ENCODE measurements at regions of chr4 and their contacts with region 1.

Region 1: DNA sequence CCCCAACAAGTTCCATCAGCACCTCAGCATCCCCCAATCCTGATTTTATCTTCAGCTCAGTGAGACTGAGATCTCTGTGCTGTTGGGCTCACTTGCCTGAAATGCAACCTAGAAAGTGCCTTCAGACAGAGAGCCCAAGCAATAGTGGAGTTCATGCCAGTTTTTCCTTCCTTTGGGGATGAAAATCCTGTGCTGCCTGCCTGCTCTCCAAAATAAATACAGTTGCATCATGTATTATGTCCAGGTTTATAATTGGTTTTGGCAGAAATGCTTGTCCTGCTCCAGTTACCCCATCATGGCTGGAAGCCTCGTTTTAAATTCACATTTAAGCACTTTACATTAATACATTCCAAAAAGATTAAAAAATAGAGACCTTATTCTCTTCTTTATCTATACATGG is 1865.5 kb upstream of the TENM3 start:
- DNase-seq: no peak
- H3K4me3 ChIP-seq: no peak overlapping the region
- CTCF ChIP-seq: no peak
- POLR2A ChIP-seq: no peak

Region 2: DNA sequence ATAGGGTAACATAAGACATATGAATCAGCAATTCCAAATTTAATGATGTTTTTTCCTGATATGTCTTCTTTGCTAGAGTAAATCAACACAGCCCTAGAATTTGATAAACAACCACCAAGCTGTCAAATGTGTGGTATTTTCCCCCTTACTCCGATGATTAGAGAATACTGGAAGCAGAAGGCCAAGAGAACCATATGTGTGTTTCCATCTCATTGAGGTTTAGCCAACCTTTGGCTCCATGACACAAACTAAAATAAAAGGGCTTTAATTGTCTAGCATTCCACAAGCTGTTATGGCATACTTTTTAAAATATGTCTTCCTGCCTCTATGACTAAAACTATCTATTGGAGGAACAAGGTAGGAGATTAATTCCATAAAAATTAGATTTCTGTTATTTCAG is 1713.1 kb before region 1 on chr4:
- intact Hi-C with region 1: loop called (anchors 5 kb)
- DNase-seq: no peak
- H3K4me3 ChIP-seq: no peak overlapping the region
- CTCF ChIP-seq: no peak
- POLR2A ChIP-seq: no peak

Region 3: DNA sequence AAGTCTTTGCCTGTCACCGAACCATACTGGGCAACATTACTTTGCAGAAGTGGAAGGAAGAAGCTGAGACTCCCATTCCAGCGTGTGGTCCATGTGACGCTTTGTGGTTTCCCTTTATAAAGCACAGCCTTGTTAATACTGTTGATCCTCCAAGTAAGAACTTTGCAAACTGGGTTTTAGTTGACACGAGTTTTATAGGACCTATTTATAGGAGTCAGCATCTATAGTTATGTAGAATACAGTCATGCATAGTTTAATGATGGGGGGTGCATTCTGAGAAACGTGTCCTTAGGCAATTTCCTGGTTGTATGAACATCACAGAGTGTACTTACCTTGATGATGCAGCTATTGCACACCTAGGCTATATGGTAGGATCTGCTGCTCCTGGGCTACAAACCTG is 13.9 kb before region 1 on chr4:
- intact Hi-C with region 1: no loop called
- DNase-seq: no peak
- H3K4me3 ChIP-seq: no peak overlapping the region
- CTCF ChIP-seq: no peak
- POLR2A ChIP-seq: no peak

Measured in lower leg skin (tissue), 4 donors.